ENCODE measurements at regions of chr14 and their contacts with region 1.

Region 1: DNA sequence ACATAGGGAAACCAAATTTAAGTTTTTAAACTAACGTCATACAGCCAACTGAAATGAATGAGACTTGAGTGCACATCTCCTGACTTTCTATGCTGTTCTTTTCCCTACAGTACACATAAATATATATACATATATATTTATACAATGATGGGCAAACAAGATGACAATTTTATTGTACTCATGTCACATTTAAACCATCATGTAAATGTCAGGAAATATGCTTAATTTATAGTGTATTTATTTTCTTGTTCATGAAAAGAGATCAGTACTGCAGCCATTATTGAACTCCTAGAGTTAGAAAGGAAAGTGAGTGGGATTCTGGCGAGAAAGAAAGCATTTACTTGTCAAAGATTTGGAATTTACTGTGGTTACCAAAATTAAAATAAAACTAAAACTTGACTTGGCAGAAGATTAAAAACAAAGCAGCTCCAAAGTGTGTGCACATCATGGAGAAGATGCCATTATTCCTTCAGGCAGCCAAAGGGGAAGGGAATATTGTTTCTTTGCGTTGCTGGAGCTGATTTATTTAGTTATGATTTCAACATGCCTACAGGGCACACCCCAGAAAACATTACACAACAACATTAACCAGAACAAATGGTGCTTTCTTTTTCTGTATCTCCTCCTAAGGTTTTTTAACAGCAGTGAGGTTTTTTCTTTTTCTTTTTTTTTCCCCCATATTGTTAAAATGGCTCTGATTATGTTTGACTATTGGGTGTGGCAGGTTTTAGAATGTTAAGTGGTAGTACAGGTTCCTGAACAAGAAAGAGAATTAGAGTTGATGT is 144.6 kb downstream of the RAD51B start:
- DNase-seq: no peak

Region 2: GRCh38 chr14:67663633-67664032 is 300.5 kb before region 1 on chr14:
- intact Hi-C with region 1: no loop called
- DNase-seq: no peak

Region 3: GRCh38 chr14:67919259-67920032 is 44.7 kb before region 1 on chr14:
- intact Hi-C with region 1: loop called in 1 of 2 experiments (anchors 2 kb)
- DNase-seq: no peak

Measured in posterior vena cava (tissue), 2 donors.